Naive thymus-derived CD8-positive, alpha-beta T cell (primary cell): ENCODE measurements at regions of chr14 and their contacts with region 1.

Region 1: DNA sequence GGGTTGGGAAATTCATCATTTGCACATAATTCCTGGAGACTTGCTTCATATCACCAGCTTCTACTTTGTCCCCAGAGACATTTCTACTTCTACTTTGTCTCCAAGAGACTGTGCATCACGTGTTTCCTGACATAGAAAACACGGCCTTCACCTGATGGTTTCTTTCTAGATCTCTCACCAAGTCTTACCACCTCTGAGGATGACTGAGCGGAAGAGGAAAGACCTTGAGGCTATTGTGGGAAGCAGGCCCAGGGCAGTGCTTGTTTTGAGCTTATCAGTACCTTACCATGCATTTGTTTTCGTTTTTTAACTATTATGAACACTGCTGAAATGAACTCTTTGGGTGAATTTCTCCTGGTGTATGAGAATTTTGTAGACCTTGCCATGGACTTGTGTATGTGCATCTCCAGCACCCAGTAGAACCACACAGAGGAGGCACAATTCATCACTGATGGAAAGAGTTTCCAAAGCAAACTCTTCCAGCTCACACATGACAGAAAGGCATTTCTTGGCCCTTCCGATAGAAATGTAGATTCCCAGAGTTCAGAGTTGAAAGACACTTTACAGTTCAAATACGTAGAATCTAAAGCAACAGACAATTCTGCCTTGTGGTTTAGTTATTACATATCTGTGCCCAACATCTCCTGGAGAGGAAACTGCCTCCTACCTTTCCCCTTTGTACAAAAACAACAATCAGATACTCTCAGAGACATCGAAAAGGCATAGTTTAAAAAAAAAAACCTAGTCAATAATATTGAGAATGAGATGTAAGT is 434.7 kb downstream of the FUT8 start:
- DNase-seq: peak; percentile 38 to 95 (median 82)
- ATAC-seq: peak; percentile 87 to 89
- H3K4me3 Mint-ChIP-seq: peak overlapping the region; percentile 46 to 90 (median 81)
- H3K27ac Mint-ChIP-seq: peak overlapping the region; percentile 92 to 100 (median 96)
- H3K4me1 Mint-ChIP-seq: peaks cover 40 to 90% (median 85%) of the 10 kb centered on the region in 4 donors
- H3K27me3 Mint-ChIP-seq: no peaks in the 10 kb centered on the region

Region 2: DNA sequence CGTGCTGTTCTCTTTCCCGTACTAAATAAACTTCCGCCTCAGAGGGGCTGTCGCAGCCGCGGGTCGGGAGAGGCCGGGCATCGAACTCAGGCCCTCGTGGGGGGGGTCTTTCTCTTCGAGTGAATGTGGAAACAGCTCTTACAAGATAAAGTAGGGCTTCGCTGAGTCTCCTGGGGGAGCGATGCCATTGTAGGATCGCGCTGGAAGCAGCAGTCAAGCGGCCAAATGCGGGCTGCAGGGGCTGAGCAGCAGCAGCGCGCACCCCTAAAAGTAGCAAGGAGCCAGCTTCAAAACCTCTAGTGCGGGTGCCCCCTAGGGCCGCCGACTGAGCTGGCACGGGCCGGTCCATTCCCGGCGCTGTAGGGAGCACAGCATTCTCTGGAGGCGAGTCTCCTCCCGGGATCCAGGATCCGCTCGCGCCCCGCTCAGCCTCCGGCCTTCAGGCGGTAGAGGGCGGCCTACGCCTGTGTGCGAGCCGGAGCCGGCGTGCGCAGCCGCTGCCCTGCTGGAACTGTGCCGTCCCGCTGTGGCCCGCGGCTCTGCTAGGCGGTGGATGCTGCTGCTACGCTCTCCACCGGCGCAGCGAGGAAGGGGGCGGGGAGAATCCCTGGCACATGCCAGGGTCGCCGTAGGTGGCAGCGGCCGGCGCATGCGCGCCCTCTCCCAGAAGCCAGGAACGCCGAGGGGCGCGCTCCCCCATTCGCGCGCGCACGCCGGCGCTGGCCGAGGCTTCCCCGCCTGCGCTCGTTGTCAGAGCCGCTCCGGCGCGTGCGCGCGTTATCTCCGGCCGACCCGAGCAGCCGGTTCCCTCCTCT is 435.0 kb before region 1 on chr14 and contains the start of gene FUT8:
- POLR2A ChIA-PET with region 1: interaction called, 35 read pairs
- DNase-seq: peak; percentile 88 to 99 (median 95)
- ATAC-seq: peak; percentile 89 to 90
- H3K4me3 Mint-ChIP-seq: peak within 1 kb of the TSS; percentile 90 to 100 (median 99)
- H3K27ac Mint-ChIP-seq: peak within 1 kb of the TSS; percentile 91 to 99 (median 98)
- H3K4me1 Mint-ChIP-seq: peaks cover 16 to 42% (median 36%) of the 10 kb centered on the region in 4 donors
- H3K27me3 Mint-ChIP-seq: no peaks in the 10 kb centered on the region
- polyA plus RNA-seq, gene FUT8: 10.0 to 15.2 (median 10.4) TPM

Region 3: GRCh38 chr14:65550779-65551643 is 296.2 kb before region 1 on chr14:
- POLR2A ChIA-PET with region 1: no interaction called
- DNase-seq: no peak
- ATAC-seq: no peak
- H3K4me3 Mint-ChIP-seq: no peak overlapping the region
- H3K27ac Mint-ChIP-seq: peak overlapping the region in 1 of 10 donors; percentile 22
- H3K4me1 Mint-ChIP-seq: peaks cover 7 to 19% (median 15%) of the 10 kb centered on the region in 4 donors
- H3K27me3 Mint-ChIP-seq: no peaks in the 10 kb centered on the region

Region 4: DNA sequence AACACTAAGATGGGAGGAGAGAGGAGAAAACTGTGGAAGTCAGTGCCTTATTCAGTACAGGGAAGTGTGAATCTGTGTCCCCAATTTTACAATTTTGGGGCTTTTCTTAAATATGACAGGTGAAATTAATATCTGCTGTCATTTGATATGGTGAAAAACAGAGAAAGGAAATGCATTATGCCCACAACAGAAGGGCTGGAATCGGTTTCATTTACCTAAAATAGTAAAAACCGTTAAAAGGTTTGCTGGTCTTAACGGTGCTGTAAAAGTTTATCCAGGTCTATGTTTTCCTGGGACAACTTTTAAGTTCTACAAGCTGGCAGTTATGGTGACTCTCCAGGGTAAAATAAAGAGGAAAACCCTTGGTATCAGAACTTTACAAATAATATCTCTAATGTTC is 123.9 kb before region 1 on chr14:
- POLR2A ChIA-PET with region 1: no interaction called
- DNase-seq: no peak
- ATAC-seq: no peak
- H3K4me3 Mint-ChIP-seq: peak overlapping the region in 7 of 10 donors; percentile 3 to 60 (median 36)
- H3K27ac Mint-ChIP-seq: peak overlapping the region in 6 of 10 donors; percentile 1 to 83 (median 51)
- H3K4me1 Mint-ChIP-seq: peaks cover 18 to 38% (median 31%) of the 10 kb centered on the region in 4 donors
- H3K27me3 Mint-ChIP-seq: no peaks in the 10 kb centered on the region

Region 5: GRCh38 chr14:65832431-65833266 is 14.6 kb before region 1 on chr14:
- POLR2A ChIA-PET with region 1: interaction called, 14 read pairs
- DNase-seq: no peak
- ATAC-seq: peak in 1 of 2 donors; percentile 41
- H3K4me3 Mint-ChIP-seq: peak overlapping the region in 1 of 10 donors; percentile 11
- H3K27ac Mint-ChIP-seq: peak overlapping the region in 2 of 10 donors; percentile 41 to 65
- H3K4me1 Mint-ChIP-seq: peaks cover 23 to 65% (median 44%) of the 10 kb centered on the region in 4 donors
- H3K27me3 Mint-ChIP-seq: no peaks in the 10 kb centered on the region

Region 6: DNA sequence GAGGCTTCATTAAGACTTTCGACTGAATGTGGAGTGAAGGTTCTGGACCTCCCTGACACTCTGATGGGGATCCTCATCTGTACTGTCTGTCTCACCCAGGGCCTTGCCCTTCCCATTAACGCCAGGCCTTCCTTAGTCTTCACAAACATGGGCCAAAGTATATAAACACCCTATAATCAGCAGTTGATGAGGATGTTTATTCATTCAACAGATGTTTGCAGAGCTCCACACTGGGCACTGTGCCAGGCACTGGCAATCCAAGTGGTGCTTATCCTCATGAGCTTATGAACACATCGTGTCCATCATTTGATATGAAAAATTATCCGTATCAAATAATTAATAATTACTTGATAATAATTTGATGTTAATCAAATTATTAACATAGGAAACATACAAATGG is 19.6 kb after region 1 on chr14:
- POLR2A ChIA-PET with region 1: interaction called, 35 read pairs
- DNase-seq: no peak
- ATAC-seq: no peak
- H3K4me3 Mint-ChIP-seq: no peak overlapping the region
- H3K27ac Mint-ChIP-seq: peak overlapping the region in 1 of 10 donors; percentile 51
- H3K4me1 Mint-ChIP-seq: peaks cover 33 to 49% (median 41%) of the 10 kb centered on the region in 4 donors
- H3K27me3 Mint-ChIP-seq: no peaks in the 10 kb centered on the region

Region 7: DNA sequence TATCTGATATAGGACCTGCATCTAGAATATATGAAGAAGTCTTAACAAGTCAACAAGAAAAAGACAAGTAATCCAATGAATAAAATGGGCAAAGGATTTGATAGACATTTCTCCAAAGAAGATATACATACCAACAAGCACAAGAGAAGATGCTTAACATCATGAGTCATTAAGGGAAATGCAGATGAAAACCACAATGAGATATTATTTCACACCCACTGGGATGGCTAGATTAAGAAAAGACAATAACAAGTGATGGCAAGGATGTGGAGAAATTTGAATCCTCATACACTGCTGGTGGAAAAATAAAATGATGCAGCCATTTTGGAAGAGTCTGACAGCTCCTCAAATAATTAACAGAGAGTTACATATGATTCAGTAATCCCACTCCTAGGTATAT is 67.9 kb after region 1 on chr14:
- POLR2A ChIA-PET with region 1: interaction called, 13 read pairs
- DNase-seq: no peak
- ATAC-seq: no peak
- H3K4me3 Mint-ChIP-seq: no peak overlapping the region
- H3K27ac Mint-ChIP-seq: peak overlapping the region in 1 of 10 donors; percentile 10
- H3K4me1 Mint-ChIP-seq: peaks cover 26 to 54% (median 47%) of the 10 kb centered on the region in 4 donors
- H3K27me3 Mint-ChIP-seq: no peaks in the 10 kb centered on the region

Region 8: GRCh38 chr14:65958664-65959562 is 111.7 kb after region 1 on chr14:
- POLR2A ChIA-PET with region 1: interaction called, 19 read pairs
- DNase-seq: peak in 4 of 10 donors; percentile 1 to 60 (median 53)
- ATAC-seq: peak; percentile 70 to 80
- H3K4me3 Mint-ChIP-seq: peak overlapping the region in 5 of 10 donors; percentile 20 to 54 (median 48)
- H3K27ac Mint-ChIP-seq: peak overlapping the region in 6 of 10 donors; percentile 24 to 86 (median 50)
- H3K4me1 Mint-ChIP-seq: peaks cover 19 to 30% (median 25%) of the 10 kb centered on the region in 4 donors
- H3K27me3 Mint-ChIP-seq: no peaks in the 10 kb centered on the region